ENCODE measurements at regions of chr6 and their contacts with region 1.

Region 1: GRCh38 chr6:4018172-4018905 is 60.6 kb downstream of the FAM217A start:
- DNase-seq: peak; percentile 98
- ATAC-seq: peak; percentile 73
- H3K4me3 ChIP-seq: peak overlapping the region; percentile 71 to 91 (median 80)
- H3K4me3 Mint-ChIP-seq: peak overlapping the region; percentile 96
- H3K27ac ChIP-seq: peak overlapping the region; percentile 94 to 97
- H3K27ac Mint-ChIP-seq: peak overlapping the region; percentile 99
- H3K4me1 ChIP-seq: peaks cover 30 to 40% of the 10 kb centered on the region in 2 donors
- H3K4me1 Mint-ChIP-seq: peaks cover 70% of the 10 kb centered on the region
- H3K27me3 ChIP-seq: no peaks in the 10 kb centered on the region
- H3K27me3 Mint-ChIP-seq: no peaks in the 10 kb centered on the region
- CTCF ChIP-seq: peak; percentile 43

Region 2: GRCh38 chr6:3258720-3259490 is 759.4 kb before region 1 on chr6 and contains the start of gene PSMG4:
- CTCF ChIA-PET with region 1: no interaction called
- POLR2A ChIA-PET with region 1: interaction called, 5 read pairs
- intact Hi-C with region 1: loop called (anchors 1 kb)
- DNase-seq: peak; percentile 92
- ATAC-seq: peak; percentile 92
- H3K4me3 ChIP-seq: peak within 1 kb of the TSS; percentile 65 to 86 (median 78)
- H3K4me3 Mint-ChIP-seq: peak within 1 kb of the TSS; percentile 97
- H3K27ac ChIP-seq: peak within 1 kb of the TSS; percentile 12 to 65
- H3K27ac Mint-ChIP-seq: peak within 1 kb of the TSS; percentile 91
- H3K4me1 ChIP-seq: peaks cover 20 to 34% of the 10 kb centered on the region in 2 donors
- H3K4me1 Mint-ChIP-seq: peaks cover 35% of the 10 kb centered on the region
- H3K27me3 ChIP-seq: no peaks in the 10 kb centered on the region
- H3K27me3 Mint-ChIP-seq: peaks cover 3% of the 10 kb centered on the region
- CTCF ChIP-seq: no peak
- total RNA-seq, gene PSMG4: 31.8 and 31.9 TPM in 2 replicates

Region 3: GRCh38 chr6:3848925-3849605 is 169.3 kb before region 1 on chr6 and contains the start of gene FAM50B:
- CTCF ChIA-PET with region 1: interaction called, 12 read pairs
- POLR2A ChIA-PET with region 1: interaction called, 6 read pairs
- intact Hi-C with region 1: loop called (anchors 1 kb)
- DNase-seq: peak; percentile 92
- ATAC-seq: peak; percentile 94
- H3K4me3 ChIP-seq: peak within 1 kb of the TSS; percentile 11 to 66 (median 65)
- H3K4me3 Mint-ChIP-seq: peak within 1 kb of the TSS; percentile 90
- H3K27ac ChIP-seq: peak within 1 kb of the TSS; percentile 54 to 65
- H3K27ac Mint-ChIP-seq: peak within 1 kb of the TSS; percentile 94
- H3K4me1 ChIP-seq: peaks cover 6 to 21% of the 10 kb centered on the region in 2 donors
- H3K4me1 Mint-ChIP-seq: peaks cover 21% of the 10 kb centered on the region
- H3K27me3 ChIP-seq: no peaks in the 10 kb centered on the region
- H3K27me3 Mint-ChIP-seq: no peaks in the 10 kb centered on the region
- CTCF ChIP-seq: peak; percentile 84
- total RNA-seq, gene FAM50B: 8.3 and 9.8 TPM in 2 replicates

Region 4: DNA sequence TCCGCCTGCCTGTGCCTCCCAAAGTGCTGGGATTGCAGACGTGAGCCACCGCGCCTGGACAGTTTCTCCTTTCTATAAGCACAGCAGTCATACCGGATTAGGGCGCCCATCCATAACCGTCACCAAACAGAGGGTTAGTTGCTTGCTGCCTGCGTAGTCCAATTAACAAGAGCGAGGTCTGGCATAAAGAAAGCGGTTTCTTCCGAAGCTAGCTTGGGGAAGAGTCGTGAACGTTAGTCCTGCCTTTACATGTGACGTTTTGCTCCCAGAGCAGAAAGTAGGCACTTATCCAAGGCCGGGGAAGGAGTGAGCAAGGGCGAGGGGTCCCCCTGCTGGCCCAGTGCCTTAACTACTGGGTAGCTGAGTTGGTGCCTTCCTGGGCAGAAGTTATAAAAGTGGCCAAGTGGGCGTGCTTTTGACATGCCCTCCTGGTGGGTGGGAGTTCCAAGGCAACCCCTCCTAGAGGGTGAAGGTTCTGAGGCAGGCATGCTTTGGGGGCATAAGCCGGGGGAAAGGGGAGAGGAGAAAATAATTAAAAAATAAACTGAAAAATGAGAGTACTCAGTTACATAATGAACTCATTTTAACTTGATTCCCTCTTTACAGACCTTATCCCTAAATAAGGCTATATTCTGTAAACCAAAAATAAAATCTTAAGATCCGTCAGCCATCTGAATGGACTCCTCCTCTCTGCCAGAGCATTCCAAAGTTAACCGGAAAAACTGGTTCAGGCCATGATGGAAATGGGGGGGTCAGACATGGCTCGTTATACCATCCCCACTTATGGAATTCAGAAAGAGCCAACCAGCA is 27.4 kb before region 1 on chr6:
- CTCF ChIA-PET with region 1: interaction called, 16 read pairs
- POLR2A ChIA-PET with region 1: interaction called, 4 read pairs
- intact Hi-C with region 1: no loop called
- DNase-seq: peak; percentile 72
- ATAC-seq: peak; percentile 85
- H3K4me3 ChIP-seq: no peak overlapping the region
- H3K4me3 Mint-ChIP-seq: no peak overlapping the region
- H3K27ac ChIP-seq: no peak overlapping the region
- H3K27ac Mint-ChIP-seq: no peak overlapping the region
- H3K4me1 ChIP-seq: peaks cover 0 to 5% of the 10 kb centered on the region in 2 donors
- H3K4me1 Mint-ChIP-seq: peaks cover 5% of the 10 kb centered on the region
- H3K27me3 ChIP-seq: no peaks in the 10 kb centered on the region
- H3K27me3 Mint-ChIP-seq: no peaks in the 10 kb centered on the region
- CTCF ChIP-seq: peak; percentile 81

Region 5: GRCh38 chr6:4775584-4776494 is 757.5 kb after region 1 on chr6 and contains the start of gene CDYL:
- CTCF ChIA-PET with region 1: no interaction called
- POLR2A ChIA-PET with region 1: no interaction called
- intact Hi-C with region 1: loop called (anchors 10 kb)
- DNase-seq: peak; percentile 94
- ATAC-seq: peak; percentile 74
- H3K4me3 ChIP-seq: peak within 1 kb of the TSS; percentile 51 to 83 (median 72)
- H3K4me3 Mint-ChIP-seq: peak within 1 kb of the TSS; percentile 97
- H3K27ac ChIP-seq: peak within 1 kb of the TSS in 1 of 2 donors; percentile 69
- H3K27ac Mint-ChIP-seq: peak within 1 kb of the TSS; percentile 93
- H3K4me1 ChIP-seq: peaks cover 19 to 26% of the 10 kb centered on the region in 2 donors
- H3K4me1 Mint-ChIP-seq: peaks cover 41% of the 10 kb centered on the region
- H3K27me3 ChIP-seq: no peaks in the 10 kb centered on the region
- H3K27me3 Mint-ChIP-seq: no peaks in the 10 kb centered on the region
- CTCF ChIP-seq: no peak
- total RNA-seq, gene CDYL: 61.0 and 63.0 TPM in 2 replicates

Region 6: DNA sequence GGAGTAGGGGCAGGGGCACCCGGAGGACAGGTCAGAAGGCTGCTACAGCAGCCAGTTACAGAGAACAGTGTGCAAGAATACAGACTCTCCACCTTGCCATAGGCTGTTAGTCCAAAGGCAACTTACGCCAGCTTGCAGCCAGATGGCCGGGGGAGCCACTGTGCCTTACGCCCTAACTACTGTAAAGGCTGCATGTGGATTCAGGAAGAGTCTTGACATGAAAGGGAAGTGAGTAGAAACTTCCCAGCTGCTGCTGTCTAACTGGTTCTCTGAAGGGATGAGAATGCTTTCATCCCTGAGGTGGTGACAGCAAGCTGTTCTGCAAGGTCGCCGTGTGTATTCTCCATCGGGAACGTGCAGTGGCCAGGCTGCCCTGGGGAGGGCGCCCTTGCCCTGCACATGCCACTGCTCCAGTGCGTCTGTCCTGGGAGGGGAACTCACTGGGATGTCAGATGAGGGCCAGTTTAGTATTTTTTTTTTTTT is 1196.3 kb after region 1 on chr6:
- CTCF ChIA-PET with region 1: no interaction called
- POLR2A ChIA-PET with region 1: no interaction called
- intact Hi-C with region 1: no loop called
- DNase-seq: peak; percentile 17
- ATAC-seq: no peak
- H3K4me3 ChIP-seq: no peak overlapping the region
- H3K4me3 Mint-ChIP-seq: no peak overlapping the region
- H3K27ac ChIP-seq: no peak overlapping the region
- H3K27ac Mint-ChIP-seq: no peak overlapping the region
- H3K4me1 ChIP-seq: no peaks in the 10 kb centered on the region
- H3K4me1 Mint-ChIP-seq: peaks cover 10% of the 10 kb centered on the region
- H3K27me3 ChIP-seq: no peaks in the 10 kb centered on the region
- H3K27me3 Mint-ChIP-seq: no peaks in the 10 kb centered on the region
- CTCF ChIP-seq: no peak

Measured in B cell (primary cell).